PC-3 (cell line): ENCODE measurements at regions of chr20 and their contacts with region 1.

Region 1: DNA sequence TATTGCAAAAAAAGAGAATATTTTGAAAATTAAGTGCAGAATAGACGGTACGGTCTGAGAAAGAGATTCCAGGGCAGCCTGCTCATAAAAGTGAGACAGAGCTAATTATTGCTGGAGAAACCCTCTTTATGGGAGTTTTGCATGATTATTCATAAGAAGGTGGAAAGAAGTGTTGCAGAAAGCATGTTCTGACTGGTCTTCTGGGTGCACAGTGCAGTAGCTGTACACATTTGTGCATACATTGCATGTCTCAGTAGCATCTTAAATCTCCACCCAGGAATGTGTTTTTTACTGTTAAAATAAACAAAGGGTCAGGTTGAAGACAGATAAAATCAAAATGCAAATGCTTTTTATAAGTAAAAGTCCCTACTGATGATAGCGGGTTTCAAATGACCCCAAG is 1813.6 kb upstream of the DEFB115 start:
- DNase-seq: no peak
- ATAC-seq: no peak
- H3K4me3 ChIP-seq: no peak overlapping the region
- H3K27ac ChIP-seq: no peak overlapping the region
- H3K4me1 ChIP-seq: no peaks in the 10 kb centered on the region
- H3K27me3 ChIP-seq: no peaks in the 10 kb centered on the region; the same call in 1 of the 2 replicates
- CTCF ChIP-seq: no peak

Region 2: GRCh38 chr20:29427201-29428060 is 16.4 kb before region 1 on chr20:
- CTCF ChIA-PET with region 1: no interaction called
- POLR2A ChIA-PET with region 1: no interaction called
- intact Hi-C with region 1: no loop called
- DNase-seq: no peak
- ATAC-seq: no peak
- H3K4me3 ChIP-seq: no peak overlapping the region
- H3K27ac ChIP-seq: no peak overlapping the region
- H3K4me1 ChIP-seq: no peaks in the 10 kb centered on the region
- H3K27me3 ChIP-seq: no peaks in the 10 kb centered on the region
- CTCF ChIP-seq: no peak

Region 3: DNA sequence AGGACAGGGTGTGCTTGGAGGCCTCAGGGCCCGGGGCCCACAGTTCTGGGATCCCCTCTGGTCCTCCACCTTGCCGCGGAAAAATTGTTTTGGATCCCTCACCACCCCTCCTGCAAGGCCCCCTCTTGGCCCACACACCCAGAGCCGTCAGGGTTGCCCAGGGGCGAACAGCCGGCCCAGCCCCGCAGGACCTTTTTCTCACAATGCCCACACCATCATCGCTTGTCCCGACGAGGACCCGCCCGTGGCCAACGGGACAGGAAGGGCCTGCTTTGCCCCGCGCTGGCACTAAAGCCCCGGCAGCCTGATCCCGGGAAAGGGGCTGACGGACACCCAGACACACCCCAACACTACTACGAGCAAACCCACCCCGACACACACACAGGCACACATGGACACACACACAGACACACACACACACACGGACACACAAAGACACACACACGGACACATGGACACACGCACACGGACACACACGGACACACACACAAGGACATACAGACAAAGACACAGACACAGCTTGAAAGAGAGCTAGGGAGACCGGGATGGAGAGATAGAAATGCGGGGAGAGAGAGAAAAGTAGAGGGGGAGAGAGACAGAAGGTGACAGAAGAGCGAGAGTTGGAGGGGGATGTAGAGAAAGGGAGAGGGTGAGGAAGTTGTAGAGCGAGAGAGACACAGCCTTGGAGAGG is 320.1 kb after region 1 on chr20:
- CTCF ChIA-PET with region 1: no interaction called
- POLR2A ChIA-PET with region 1: no interaction called
- intact Hi-C with region 1: loop called (anchors 10 kb)
- DNase-seq: no peak
- ATAC-seq: no peak
- H3K4me3 ChIP-seq: no peak overlapping the region
- H3K27ac ChIP-seq: no peak overlapping the region
- H3K4me1 ChIP-seq: no peaks in the 10 kb centered on the region
- H3K27me3 ChIP-seq: no peaks in the 10 kb centered on the region
- CTCF ChIP-seq: no peak

Region 4: GRCh38 chr20:31308535-31309162 is 1864.8 kb after region 1 on chr20 and contains the start of gene DEFB116:
- CTCF ChIA-PET with region 1: no interaction called
- POLR2A ChIA-PET with region 1: no interaction called
- intact Hi-C with region 1: loop called (anchors 2 kb)
- DNase-seq: no peak
- ATAC-seq: no peak
- H3K4me3 ChIP-seq: no peak within 1 kb of the TSS
- H3K27ac ChIP-seq: no peak within 1 kb of the TSS
- H3K4me1 ChIP-seq: no peaks in the 10 kb centered on the region
- H3K27me3 ChIP-seq: no peaks in the 10 kb centered on the region
- CTCF ChIP-seq: no peak
- total RNA-seq, gene DEFB116: not detected in 2 replicates